Activated T-helper 2 cell treated with anti-CD3 and anti-CD28 coated beads, Interferon-gamma antibody, Interleukin-2, Interleukin-4, amounts not matched to agents 10 μg/mL and 5 μg/mL and 100 μg/mL, durations not matched to agents 14 hours and 24 hours and 36 hours (primary cell): ENCODE measurements at regions of chr6 and their contacts with region 1.

Region 1: GRCh38 chr6:73580247-73581149 is 59.7 kb upstream of the EEF1A1 start:
- DNase-seq: peak; percentile 47
- H3K4me3 Mint-ChIP-seq: peak overlapping the region; percentile 51
- H3K27ac Mint-ChIP-seq: peak overlapping the region; percentile 97
- H3K4me1 Mint-ChIP-seq: peaks cover 18% of the 10 kb centered on the region
- H3K27me3 Mint-ChIP-seq: no peaks in the 10 kb centered on the region

Region 2: GRCh38 chr6:73451223-73452107 is 129.0 kb before region 1 on chr6:
- intact Hi-C with region 1: loop called (anchors 10 kb)
- DNase-seq: peak; percentile 37
- H3K4me3 Mint-ChIP-seq: peak overlapping the region; percentile 87
- H3K27ac Mint-ChIP-seq: peak overlapping the region; percentile 82
- H3K4me1 Mint-ChIP-seq: peaks cover 25% of the 10 kb centered on the region
- H3K27me3 Mint-ChIP-seq: no peaks in the 10 kb centered on the region